GM12878 (cell line): ENCODE measurements at regions of chr13 and their contacts with region 1.

Region 1: DNA sequence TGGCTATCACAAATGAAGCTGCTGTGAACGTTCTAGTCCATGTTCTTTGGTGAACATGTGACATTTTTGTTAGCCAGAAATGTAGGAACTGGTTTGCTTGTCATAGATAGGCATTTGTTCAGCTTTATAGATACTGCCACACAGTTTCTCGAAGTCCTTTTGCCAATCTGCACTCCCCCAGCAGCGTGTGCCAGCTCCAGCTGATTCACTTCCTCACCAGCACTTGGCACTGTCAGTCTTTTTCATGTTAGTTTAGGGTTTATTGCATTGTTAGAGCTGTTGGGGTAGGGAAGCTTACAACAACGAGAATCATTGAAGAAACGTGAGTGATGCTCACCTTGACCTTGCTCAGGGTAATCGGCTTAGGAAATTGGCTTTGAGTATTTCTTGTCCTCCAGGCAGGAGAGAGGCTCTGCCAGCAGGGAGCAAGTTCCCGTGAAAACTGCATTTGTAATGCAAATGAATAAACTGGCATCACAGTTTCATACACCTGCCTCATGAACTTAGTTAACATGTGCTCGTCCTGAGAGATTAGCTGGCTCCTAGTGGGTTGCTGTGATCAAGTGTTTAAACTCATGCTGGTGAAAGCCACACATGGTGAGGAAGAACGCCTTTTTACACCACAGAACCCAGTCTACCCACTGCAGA is 83.9 kb downstream of the ING1 start:
- DNase-seq: no peak
- ATAC-seq: no peak
- H3K4me3 ChIP-seq: no peak overlapping the region
- H3K27ac ChIP-seq: no peak overlapping the region
- H3K4me1 ChIP-seq: no peaks in the 10 kb centered on the region
- H3K27me3 ChIP-seq: peaks cover 0 to 10% of the 10 kb centered on the region in 2 experiments; a peak in 2 of 4 replicates
- CTCF ChIP-seq: no peak
- EP300 ChIP-seq: no peak
- POLR2A ChIP-seq: no peak
- RAD21 ChIP-seq: no peak

Region 2: DNA sequence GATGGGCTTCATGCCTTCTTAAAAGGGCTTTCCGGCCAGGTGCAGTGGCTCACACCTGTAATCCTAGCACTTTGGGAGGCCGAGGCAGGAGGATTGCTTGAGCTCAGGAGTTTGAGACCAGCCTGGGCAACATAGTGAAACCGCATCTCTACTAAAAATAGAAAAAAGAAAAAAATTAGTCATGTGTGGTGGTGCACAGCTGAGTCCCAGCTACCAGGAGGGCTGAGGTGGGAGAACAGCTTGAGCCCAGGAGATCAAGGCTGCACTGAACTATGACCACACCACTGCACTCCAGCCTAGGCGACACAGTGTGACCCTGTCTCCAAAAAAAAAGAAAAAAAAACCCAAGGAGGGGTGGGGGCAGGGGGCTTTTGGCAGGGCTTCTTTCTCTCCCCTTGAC is 98.7 kb before region 1 on chr13:
- CTCF ChIA-PET with region 1: no interaction called
- POLR2A ChIA-PET with region 1: interaction called, 11 read pairs
- RAD21 ChIA-PET with region 1: no interaction called
- SMC1A ChIA-PET with region 1: no interaction called
- in situ Hi-C with region 1: no loop called
- intact Hi-C with region 1: no loop called
- DNase-seq: no peak
- ATAC-seq: peak; percentile 85
- H3K4me3 ChIP-seq: no peak overlapping the region
- H3K27ac ChIP-seq: no peak overlapping the region
- H3K4me1 ChIP-seq: peaks cover 14% of the 10 kb centered on the region
- H3K27me3 ChIP-seq: no peaks in the 10 kb centered on the region
- CTCF ChIP-seq: no peak
- EP300 ChIP-seq: no peak
- POLR2A ChIP-seq: no peak
- RAD21 ChIP-seq: no peak

Region 3: GRCh38 chr13:110826861-110827672 is 29.7 kb after region 1 on chr13:
- CTCF ChIA-PET with region 1: no interaction called
- POLR2A ChIA-PET with region 1: no interaction called
- RAD21 ChIA-PET with region 1: no interaction called
- SMC1A ChIA-PET with region 1: no interaction called
- in situ Hi-C with region 1: no loop called
- intact Hi-C with region 1: no loop called
- DNase-seq: no peak
- ATAC-seq: no peak
- H3K4me3 ChIP-seq: no peak overlapping the region
- H3K27ac ChIP-seq: no peak overlapping the region
- H3K4me1 ChIP-seq: no peaks in the 10 kb centered on the region
- H3K27me3 ChIP-seq: no peaks in the 10 kb centered on the region
- CTCF ChIP-seq: no peak
- EP300 ChIP-seq: no peak
- POLR2A ChIP-seq: no peak
- RAD21 ChIP-seq: no peak

Region 4: DNA sequence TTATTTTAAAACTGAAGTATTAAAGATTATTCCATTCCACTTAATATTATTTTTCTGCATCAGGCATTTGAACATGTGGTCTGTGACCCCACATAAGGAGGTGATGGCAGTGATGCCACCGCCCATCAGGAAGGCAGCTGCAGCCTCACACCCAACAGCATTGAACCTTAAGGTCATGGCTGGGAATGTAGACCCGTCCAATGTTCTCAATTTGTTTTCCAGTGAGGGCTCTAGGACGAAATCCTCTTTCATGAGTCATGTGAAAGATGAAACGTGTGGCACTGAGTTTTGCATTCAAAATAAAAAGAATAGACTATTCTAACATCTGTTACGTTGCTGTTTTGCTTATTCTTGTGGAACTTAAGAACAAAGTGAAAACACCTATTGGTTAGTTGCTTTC is 192.0 kb after region 1 on chr13:
- CTCF ChIA-PET with region 1: no interaction called
- POLR2A ChIA-PET with region 1: no interaction called
- RAD21 ChIA-PET with region 1: no interaction called
- SMC1A ChIA-PET with region 1: no interaction called
- in situ Hi-C with region 1: no loop called
- intact Hi-C with region 1: no loop called
- DNase-seq: no peak
- ATAC-seq: no peak
- H3K4me3 ChIP-seq: no peak overlapping the region
- H3K27ac ChIP-seq: no peak overlapping the region
- H3K4me1 ChIP-seq: no peaks in the 10 kb centered on the region
- H3K27me3 ChIP-seq: no peaks in the 10 kb centered on the region
- CTCF ChIP-seq: no peak
- EP300 ChIP-seq: no peak
- POLR2A ChIP-seq: no peak
- RAD21 ChIP-seq: no peak